ENCODE measurements at regions of chr2 and their contacts with region 1.

Region 1: GRCh38 chr2:24754985-24755705 is 38.0 kb downstream of the PTRHD1 start:
- DNase-seq: no peak
- H3K4me3 ChIP-seq: no peak overlapping the region
- H3K27ac ChIP-seq: no peak overlapping the region
- H3K4me1 ChIP-seq: no peaks in the 10 kb centered on the region
- CTCF ChIP-seq: no peak

Region 2: DNA sequence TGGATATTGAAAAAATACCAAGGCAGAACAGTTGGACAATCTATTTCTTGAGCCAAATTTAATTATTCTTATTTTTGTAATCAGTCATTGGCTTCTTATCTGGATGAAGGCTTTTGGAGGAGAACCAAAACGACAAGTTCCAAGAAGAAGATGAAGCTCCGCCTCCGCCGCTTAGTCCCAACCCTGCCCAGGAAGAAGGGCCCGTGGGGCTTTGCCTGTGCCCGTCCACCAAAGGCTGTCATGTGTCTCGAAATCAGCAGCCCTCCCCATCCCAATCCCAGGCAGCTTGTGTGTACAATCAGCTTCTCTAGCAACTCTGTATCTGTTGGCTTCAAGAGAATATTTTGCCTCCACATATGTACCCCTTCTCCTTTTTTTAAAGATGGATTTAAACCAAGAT is 13.5 kb after region 1 on chr2:
- CTCF ChIA-PET with region 1: no interaction called
- POLR2A ChIA-PET with region 1: interaction called, 12 read pairs
- intact Hi-C with region 1: no loop called
- DNase-seq: no peak
- H3K4me3 ChIP-seq: no peak overlapping the region
- H3K27ac ChIP-seq: no peak overlapping the region
- H3K4me1 ChIP-seq: no peaks in the 10 kb centered on the region
- CTCF ChIP-seq: no peak

Measured in OCI-LY7 (cell line).